Uterus (tissue), 4 donors: ENCODE measurements at regions of chr9 and their contacts with region 1.

Region 1: GRCh38 chr9:36407122-36407723 is 7.2 kb upstream of the RNF38 start:
- DNase-seq: peak; percentile 56 to 59
- H3K4me3 ChIP-seq: no peak overlapping the region
- H3K27ac ChIP-seq: peak overlapping the region in 1 of 2 donors; percentile 15
- H3K4me1 ChIP-seq: no peaks in the 10 kb centered on the region
- H3K27me3 ChIP-seq: no peaks in the 10 kb centered on the region
- CTCF ChIP-seq: peak; percentile 88 to 95 (median 92)
- POLR2A ChIP-seq: no peak

Region 2: GRCh38 chr9:36487482-36488388 is 80.5 kb after region 1 on chr9:
- intact Hi-C with region 1: no loop called
- DNase-seq: peak; percentile 87 to 91
- H3K4me3 ChIP-seq: peak overlapping the region; percentile 52 to 93
- H3K27ac ChIP-seq: peak overlapping the region; percentile 93
- H3K4me1 ChIP-seq: no peaks in the 10 kb centered on the region
- H3K27me3 ChIP-seq: no peaks in the 10 kb centered on the region
- CTCF ChIP-seq: peak in 2 of 4 experiments; percentile 22 to 42
- POLR2A ChIP-seq: peak; percentile 80 to 93

Region 3: GRCh38 chr9:36499174-36499890 is 92.1 kb after region 1 on chr9:
- intact Hi-C with region 1: no loop called
- DNase-seq: no peak
- H3K4me3 ChIP-seq: no peak overlapping the region
- H3K27ac ChIP-seq: no peak overlapping the region
- H3K4me1 ChIP-seq: no peaks in the 10 kb centered on the region
- H3K27me3 ChIP-seq: no peaks in the 10 kb centered on the region
- CTCF ChIP-seq: no peak
- POLR2A ChIP-seq: no peak

Region 4: DNA sequence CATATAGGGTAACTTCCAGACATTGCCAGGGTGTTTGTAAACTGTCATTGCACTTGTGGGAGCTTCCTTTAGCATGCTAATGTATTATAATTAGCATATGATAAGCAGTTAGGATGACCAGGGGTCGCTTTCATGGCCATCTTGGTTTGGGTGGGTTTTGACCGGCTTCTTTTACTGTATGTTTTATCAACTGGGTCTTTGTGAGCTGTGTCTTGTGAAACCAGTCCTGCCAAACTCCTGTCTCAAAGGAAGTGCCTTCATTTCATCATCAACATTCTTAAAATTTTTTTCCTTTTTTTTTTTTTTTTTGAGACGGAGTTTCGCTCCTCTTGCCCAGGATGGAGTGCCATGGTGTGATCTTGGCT is 153.6 kb after region 1 on chr9:
- intact Hi-C with region 1: loop called (anchors 5 kb)
- DNase-seq: no peak
- H3K4me3 ChIP-seq: no peak overlapping the region
- H3K27ac ChIP-seq: no peak overlapping the region
- H3K4me1 ChIP-seq: no peaks in the 10 kb centered on the region
- H3K27me3 ChIP-seq: no peaks in the 10 kb centered on the region
- CTCF ChIP-seq: no peak
- POLR2A ChIP-seq: no peak